OCI-LY7 (cell line): ENCODE measurements at regions of chr12 and their contacts with region 1.

Region 1: GRCh38 chr12:89783357-89784060 is 74.9 kb upstream of the ATP2B1 start:
- DNase-seq: no peak
- H3K4me3 ChIP-seq: no peak overlapping the region
- H3K27ac ChIP-seq: no peak overlapping the region
- H3K4me1 ChIP-seq: no peaks in the 10 kb centered on the region
- CTCF ChIP-seq: no peak

Region 2: GRCh38 chr12:89765959-89766824 is 17.3 kb before region 1 on chr12:
- CTCF ChIA-PET with region 1: interaction called, 3 read pairs
- POLR2A ChIA-PET with region 1: interaction called, 10 read pairs
- intact Hi-C with region 1: no loop called
- DNase-seq: peak; percentile 39
- H3K4me3 ChIP-seq: peak overlapping the region; percentile 24
- H3K27ac ChIP-seq: peak overlapping the region; percentile 60
- H3K4me1 ChIP-seq: peaks cover 22% of the 10 kb centered on the region
- CTCF ChIP-seq: no peak

Region 3: DNA sequence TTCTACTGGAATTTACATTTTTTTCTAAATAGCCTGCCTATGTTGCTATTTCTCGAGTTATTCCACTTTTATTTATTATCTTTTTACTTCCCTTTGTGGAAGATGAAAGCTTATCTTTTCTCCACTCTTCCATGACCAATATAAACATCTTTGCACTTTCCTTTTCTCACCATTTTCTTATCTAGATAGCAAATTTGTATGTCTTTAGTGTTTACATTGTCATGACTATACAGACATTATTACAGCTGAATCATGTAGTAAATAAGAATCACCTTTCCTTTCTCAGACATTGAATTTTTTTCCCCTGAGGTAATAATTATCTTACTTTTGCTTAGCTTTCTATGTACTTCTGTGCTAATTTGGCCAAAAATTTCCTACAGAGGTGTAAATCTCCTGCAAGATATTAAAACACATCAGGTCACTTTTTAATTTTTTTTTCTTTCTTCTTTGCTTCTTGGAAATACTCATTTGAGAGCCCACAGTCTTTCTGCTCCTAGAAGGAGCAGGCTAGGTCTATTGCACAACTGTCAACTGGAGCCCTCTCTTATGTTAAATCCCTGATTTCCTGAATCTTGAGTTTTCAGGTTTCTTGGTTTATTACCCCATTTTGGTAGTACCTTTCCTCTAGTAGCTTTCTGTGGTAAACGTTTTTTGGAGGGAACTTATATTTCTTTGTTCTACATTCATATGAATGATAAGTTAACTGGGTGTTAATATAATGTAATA is 34.2 kb after region 1 on chr12:
- CTCF ChIA-PET with region 1: no interaction called
- POLR2A ChIA-PET with region 1: interaction called, 10 read pairs
- intact Hi-C with region 1: no loop called
- DNase-seq: no peak
- H3K4me3 ChIP-seq: no peak overlapping the region
- H3K27ac ChIP-seq: no peak overlapping the region
- H3K4me1 ChIP-seq: peaks cover 9% of the 10 kb centered on the region
- CTCF ChIP-seq: no peak